WTC11 (cell line): ENCODE measurements at regions of chr10 and their contacts with region 1.

Region 1: DNA sequence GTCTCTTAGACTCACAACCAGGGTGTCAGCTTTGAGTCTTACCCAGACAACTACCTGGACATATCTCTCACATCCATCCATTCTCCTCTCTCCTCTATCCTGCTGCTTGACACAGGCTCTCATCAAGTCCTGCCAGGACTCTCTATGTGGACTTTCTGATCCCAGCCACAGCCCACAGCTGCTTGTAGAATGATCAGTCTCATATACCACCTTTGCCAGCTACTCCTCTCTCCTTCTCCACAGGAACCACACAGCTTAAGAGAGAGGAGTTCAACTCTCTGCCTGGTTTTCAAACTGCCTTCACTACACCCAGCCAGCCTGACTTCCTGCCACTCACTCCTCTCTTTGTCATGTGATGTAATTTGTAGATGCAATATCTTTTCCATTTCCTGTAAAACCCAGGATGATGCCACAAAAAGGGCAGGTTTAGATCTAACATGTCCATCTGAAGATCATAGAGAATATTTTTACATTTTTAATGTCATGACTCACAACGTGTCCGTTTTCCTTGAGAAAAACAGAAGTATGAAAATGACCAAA is 154.0 kb downstream of the RAB11FIP2 start:
- DNase-seq: no peak
- ATAC-seq: no peak; the same call in 1 of the 2 replicates
- H3K4me3 Mint-ChIP-seq: no peak overlapping the region
- H3K27ac Mint-ChIP-seq: no peak overlapping the region
- H3K4me1 Mint-ChIP-seq: peaks cover 25% of the 10 kb centered on the region
- H3K27me3 Mint-ChIP-seq: peaks cover 19% of the 10 kb centered on the region
- CTCF ChIP-seq: no peak

Region 2: GRCh38 chr10:117860823-117861222 is 31.9 kb before region 1 on chr10:
- CTCF ChIA-PET with region 1: no interaction called
- POLR2A ChIA-PET with region 1: no interaction called
- DNase-seq: no peak
- ATAC-seq: peak; percentile 47; the same call in 1 of the 2 replicates
- H3K4me3 Mint-ChIP-seq: no peak overlapping the region
- H3K27ac Mint-ChIP-seq: no peak overlapping the region
- H3K4me1 Mint-ChIP-seq: no peaks in the 10 kb centered on the region
- H3K27me3 Mint-ChIP-seq: peaks cover 3% of the 10 kb centered on the region
- CTCF ChIP-seq: peak; percentile 33

Region 3: GRCh38 chr10:118216020-118216419 is 323.3 kb after region 1 on chr10:
- CTCF ChIA-PET with region 1: no interaction called
- POLR2A ChIA-PET with region 1: no interaction called
- DNase-seq: no peak
- ATAC-seq: no peak
- H3K4me3 Mint-ChIP-seq: no peak overlapping the region
- H3K27ac Mint-ChIP-seq: no peak overlapping the region
- H3K4me1 Mint-ChIP-seq: 0 out of 2 replicates have a peak, but pooled peaks cover 3% of the 10 kb centered on the region
- H3K27me3 Mint-ChIP-seq: peaks cover 3% of the 10 kb centered on the region
- CTCF ChIP-seq: no peak

Region 4: GRCh38 chr10:119633538-119634218 is 1740.9 kb after region 1 on chr10:
- CTCF ChIA-PET with region 1: no interaction called
- POLR2A ChIA-PET with region 1: interaction called, 10 read pairs
- DNase-seq: no peak
- ATAC-seq: no peak
- H3K4me3 Mint-ChIP-seq: no peak overlapping the region
- H3K27ac Mint-ChIP-seq: no peak overlapping the region
- H3K4me1 Mint-ChIP-seq: no peaks in the 10 kb centered on the region
- H3K27me3 Mint-ChIP-seq: no peaks in the 10 kb centered on the region
- CTCF ChIP-seq: no peak